ENCODE measurements at regions of chr17 and their contacts with region 1.

Region 1: GRCh38 chr17:39980351-39981206 is at the start of gene PSMD3:
- DNase-seq: peak; percentile 99
- H3K4me3 Mint-ChIP-seq: peak within 1 kb of the TSS; percentile 91
- H3K27ac Mint-ChIP-seq: peak within 1 kb of the TSS; percentile 82
- H3K4me1 Mint-ChIP-seq: peaks cover 35% of the 10 kb centered on the region
- H3K27me3 Mint-ChIP-seq: peaks cover 12% of the 10 kb centered on the region
- total RNA-seq, gene PSMD3: 90.3 to 92.2 TPM

Region 2: GRCh38 chr17:39621523-39622379 is 358.8 kb before region 1 on chr17:
- CTCF ChIA-PET with region 1: interaction called, 10 read pairs
- POLR2A ChIA-PET with region 1: interaction called, 4 read pairs
- DNase-seq: peak; percentile 92
- H3K4me3 Mint-ChIP-seq: peak overlapping the region; percentile 72
- H3K27ac Mint-ChIP-seq: peak overlapping the region; percentile 89
- H3K4me1 Mint-ChIP-seq: peaks cover 27% of the 10 kb centered on the region
- H3K27me3 Mint-ChIP-seq: peaks cover 49% of the 10 kb centered on the region

Region 3: GRCh38 chr17:39794249-39794970 is 186.2 kb before region 1 on chr17:
- CTCF ChIA-PET with region 1: no interaction called
- POLR2A ChIA-PET with region 1: interaction called, 12 read pairs
- DNase-seq: no peak
- H3K4me3 Mint-ChIP-seq: no peak overlapping the region
- H3K27ac Mint-ChIP-seq: peak overlapping the region; percentile 88
- H3K4me1 Mint-ChIP-seq: peaks cover 63% of the 10 kb centered on the region
- H3K27me3 Mint-ChIP-seq: no peaks in the 10 kb centered on the region

Region 4: DNA sequence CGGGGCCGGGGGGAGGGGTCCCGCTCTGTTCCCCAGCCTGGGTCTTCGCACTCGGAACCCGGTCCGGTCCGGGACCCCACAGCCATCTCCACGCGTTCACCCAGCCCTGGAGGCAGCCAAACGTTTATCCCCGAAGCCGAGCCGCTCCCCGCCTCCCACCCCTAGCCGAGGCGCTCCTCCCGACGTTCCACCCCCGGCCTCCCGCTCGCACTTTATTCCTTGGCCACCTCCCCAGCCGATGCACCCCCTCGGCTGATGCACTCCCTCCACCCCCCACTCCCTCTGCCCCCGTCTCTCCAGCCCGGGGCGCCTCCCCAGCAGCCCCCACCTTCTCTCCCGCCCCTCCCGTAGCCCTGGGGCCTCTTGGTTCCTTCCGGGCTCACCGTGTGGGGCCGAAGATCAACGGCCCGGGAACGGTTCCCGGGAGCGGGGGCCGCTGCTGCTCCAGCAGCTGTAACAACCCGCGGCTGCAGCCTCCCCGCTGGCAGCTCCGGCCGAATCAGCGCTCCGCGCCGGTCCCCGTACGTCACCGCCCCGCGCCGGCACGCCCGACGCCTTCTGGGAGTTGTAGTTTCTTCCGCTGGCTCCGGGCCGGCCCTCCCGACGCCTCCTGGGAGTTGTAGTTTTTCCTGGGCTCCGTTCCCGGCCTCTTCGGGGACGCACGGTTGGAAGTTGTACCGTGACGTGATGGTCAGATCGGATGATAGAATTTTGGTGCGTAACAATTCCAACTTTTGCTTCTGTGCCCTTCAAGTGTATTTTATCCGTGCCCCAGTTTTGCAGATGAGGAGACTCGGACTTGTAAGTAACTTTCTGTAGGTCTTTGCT is 53.3 kb before region 1 on chr17 and contains the starts of genes LRRC3C and ORMDL3:
- CTCF ChIA-PET with region 1: interaction called, 12 read pairs
- POLR2A ChIA-PET with region 1: interaction called, 26 read pairs
- DNase-seq: peak; percentile 93
- H3K4me3 Mint-ChIP-seq: peak within 1 kb of the TSS; percentile 83
- H3K27ac Mint-ChIP-seq: peak within 1 kb of the TSS; percentile 95
- H3K4me1 Mint-ChIP-seq: peaks cover 62% of the 10 kb centered on the region
- H3K27me3 Mint-ChIP-seq: no peaks in the 10 kb centered on the region
- total RNA-seq, gene LRRC3C: not detected
- total RNA-seq, gene ORMDL3: 104 to 111 TPM

Region 5: GRCh38 chr17:39952680-39953470 is 27.7 kb before region 1 on chr17:
- CTCF ChIA-PET with region 1: interaction called, 72 read pairs
- POLR2A ChIA-PET with region 1: interaction called, 12 read pairs
- DNase-seq: peak; percentile 98
- H3K4me3 Mint-ChIP-seq: peak overlapping the region; percentile 76
- H3K27ac Mint-ChIP-seq: peak overlapping the region; percentile 44
- H3K4me1 Mint-ChIP-seq: peaks cover 14% of the 10 kb centered on the region
- H3K27me3 Mint-ChIP-seq: peaks cover 11% of the 10 kb centered on the region

Region 6: DNA sequence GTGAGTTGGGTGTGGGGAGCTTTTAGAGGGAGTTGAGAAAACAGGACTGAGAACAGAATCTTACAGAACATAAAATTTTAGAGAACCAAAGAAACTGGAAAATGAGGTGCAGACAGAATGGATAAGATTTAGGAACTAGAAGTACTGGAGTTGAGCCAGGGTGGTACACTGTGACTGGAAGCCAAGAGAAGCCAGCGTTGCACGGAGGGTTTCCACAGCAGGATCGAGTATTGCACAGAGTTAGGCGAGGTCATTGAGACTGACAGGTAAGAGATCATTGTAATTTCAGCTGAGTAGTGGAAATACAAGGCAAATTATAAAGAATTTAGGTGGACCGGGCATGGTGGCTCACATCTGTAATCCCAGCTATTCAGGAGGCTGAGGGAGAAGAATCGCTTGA is 11.2 kb before region 1 on chr17:
- CTCF ChIA-PET with region 1: interaction called, 13 read pairs
- POLR2A ChIA-PET with region 1: interaction called, 22 read pairs
- DNase-seq: no peak
- H3K4me3 Mint-ChIP-seq: no peak overlapping the region
- H3K27ac Mint-ChIP-seq: no peak overlapping the region
- H3K4me1 Mint-ChIP-seq: peaks cover 15% of the 10 kb centered on the region
- H3K27me3 Mint-ChIP-seq: peaks cover 47% of the 10 kb centered on the region